ENCODE measurements at regions of chr19 and their contacts with region 1.

Region 1: GRCh38 chr19:3852614-3853254 is 16.1 kb downstream of the ZFR2 start:
- DNase-seq: peak; percentile 79
- ATAC-seq: peak; percentile 85
- H3K4me3 ChIP-seq: no peak overlapping the region
- H3K27ac ChIP-seq: peak overlapping the region; percentile 38; the same call in 1 of the 2 replicates
- H3K4me1 ChIP-seq: peaks cover 21 to 39% of the 10 kb centered on the region in 2 experiments
- H3K27me3 ChIP-seq: no peaks in the 10 kb centered on the region
- CTCF ChIP-seq: peak; percentile 77 to 86 (median 78); a peak in 5 of 6 replicates
- POLR2A ChIP-seq: no peak
- RAD21 ChIP-seq: peak; percentile 97

Region 2: GRCh38 chr19:3665681-3666544 is 186.8 kb before region 1 on chr19:
- CTCF ChIA-PET with region 1: interaction called, 6 read pairs
- POLR2A ChIA-PET with region 1: no interaction called
- RAD21 ChIA-PET with region 1: no interaction called
- intact Hi-C with region 1: loop called (anchors 1 kb)
- DNase-seq: no peak
- ATAC-seq: peak; percentile 90
- H3K4me3 ChIP-seq: no peak overlapping the region
- H3K27ac ChIP-seq: no peak overlapping the region
- H3K4me1 ChIP-seq: peaks cover 0 to 8% of the 10 kb centered on the region in 2 experiments; a peak in 1 of 4 replicates
- H3K27me3 ChIP-seq: no peaks in the 10 kb centered on the region
- CTCF ChIP-seq: peak; percentile 77 to 89 (median 81)
- POLR2A ChIP-seq: no peak
- RAD21 ChIP-seq: peak; percentile 90

Region 3: DNA sequence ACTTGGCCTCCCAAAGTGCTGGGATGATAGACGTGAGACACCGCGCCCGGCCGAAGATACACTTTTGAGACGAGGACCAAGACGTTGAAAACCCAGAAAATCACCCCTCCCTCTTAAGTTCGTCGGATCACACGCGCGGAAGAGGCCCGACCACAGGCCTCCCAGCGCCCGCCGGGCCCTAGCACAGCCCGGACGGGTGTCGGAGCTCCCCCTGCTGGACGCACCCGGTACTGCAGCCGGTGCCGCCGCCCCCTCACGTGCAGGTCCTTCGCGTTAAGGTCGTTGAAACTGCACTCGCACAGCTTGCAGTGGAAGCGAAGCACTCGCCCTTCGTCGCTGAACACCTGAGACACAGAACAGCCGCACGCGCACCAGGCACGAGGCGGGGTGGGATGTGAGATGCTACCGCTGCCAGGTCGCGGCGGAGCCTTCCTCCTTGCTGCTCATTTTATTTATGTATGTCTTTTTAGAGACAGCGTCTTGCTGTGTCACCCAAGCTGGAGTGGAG is 30.8 kb before region 1 on chr19:
- CTCF ChIA-PET with region 1: interaction called, 13 read pairs
- POLR2A ChIA-PET with region 1: no interaction called
- RAD21 ChIA-PET with region 1: no interaction called
- intact Hi-C with region 1: no loop called
- DNase-seq: peak; percentile 40
- ATAC-seq: peak; percentile 94
- H3K4me3 ChIP-seq: no peak overlapping the region
- H3K27ac ChIP-seq: no peak overlapping the region
- H3K4me1 ChIP-seq: peaks cover 0 to 6% of the 10 kb centered on the region in 2 experiments; a peak in 1 of 4 replicates
- H3K27me3 ChIP-seq: no peaks in the 10 kb centered on the region
- CTCF ChIP-seq: peak; percentile 79 to 99 (median 99)
- POLR2A ChIP-seq: no peak
- RAD21 ChIP-seq: peak; percentile 85

Region 4: DNA sequence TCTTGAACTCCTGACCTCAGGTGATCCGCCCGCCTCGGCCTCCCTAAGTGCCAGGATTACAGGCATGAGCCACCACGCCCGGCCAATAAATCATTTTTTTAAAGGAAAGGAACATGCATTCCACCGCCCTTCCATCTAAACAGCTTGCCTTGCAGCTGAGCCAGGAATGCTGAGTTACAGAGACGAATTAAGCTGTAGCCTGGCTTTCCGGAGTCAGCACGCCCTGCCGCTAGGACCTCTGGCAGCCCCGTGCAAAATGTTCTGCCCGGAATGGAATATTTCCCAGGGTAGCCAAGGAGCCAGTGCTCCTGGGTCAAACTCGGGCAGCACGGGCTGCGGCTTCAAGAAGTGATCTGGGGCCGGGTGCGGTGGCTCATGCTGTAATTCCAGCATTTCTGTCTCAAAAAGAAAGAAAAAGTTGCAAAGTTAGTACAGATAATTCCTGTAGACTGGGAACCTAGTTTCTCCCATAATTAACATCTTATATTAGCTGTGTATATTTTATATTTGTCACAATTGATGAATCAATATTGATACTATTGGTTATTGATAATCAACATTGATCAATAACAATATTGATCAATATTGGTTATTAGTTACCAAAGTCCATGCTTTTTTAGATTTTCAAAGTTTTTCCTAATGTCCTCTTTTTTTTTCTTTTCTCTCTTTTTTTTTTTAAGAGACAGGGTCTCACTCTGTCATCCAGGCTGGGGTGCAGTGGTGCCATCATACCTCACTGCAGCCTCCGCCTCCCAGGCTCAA is 47.0 kb after region 1 on chr19:
- CTCF ChIA-PET with region 1: no interaction called
- POLR2A ChIA-PET with region 1: no interaction called
- RAD21 ChIA-PET with region 1: no interaction called
- intact Hi-C with region 1: no loop called
- DNase-seq: no peak
- ATAC-seq: no peak
- H3K4me3 ChIP-seq: no peak overlapping the region
- H3K27ac ChIP-seq: no peak overlapping the region
- H3K4me1 ChIP-seq: no peaks in the 10 kb centered on the region
- H3K27me3 ChIP-seq: no peaks in the 10 kb centered on the region
- CTCF ChIP-seq: no peak
- POLR2A ChIP-seq: no peak
- RAD21 ChIP-seq: no peak

Region 5: DNA sequence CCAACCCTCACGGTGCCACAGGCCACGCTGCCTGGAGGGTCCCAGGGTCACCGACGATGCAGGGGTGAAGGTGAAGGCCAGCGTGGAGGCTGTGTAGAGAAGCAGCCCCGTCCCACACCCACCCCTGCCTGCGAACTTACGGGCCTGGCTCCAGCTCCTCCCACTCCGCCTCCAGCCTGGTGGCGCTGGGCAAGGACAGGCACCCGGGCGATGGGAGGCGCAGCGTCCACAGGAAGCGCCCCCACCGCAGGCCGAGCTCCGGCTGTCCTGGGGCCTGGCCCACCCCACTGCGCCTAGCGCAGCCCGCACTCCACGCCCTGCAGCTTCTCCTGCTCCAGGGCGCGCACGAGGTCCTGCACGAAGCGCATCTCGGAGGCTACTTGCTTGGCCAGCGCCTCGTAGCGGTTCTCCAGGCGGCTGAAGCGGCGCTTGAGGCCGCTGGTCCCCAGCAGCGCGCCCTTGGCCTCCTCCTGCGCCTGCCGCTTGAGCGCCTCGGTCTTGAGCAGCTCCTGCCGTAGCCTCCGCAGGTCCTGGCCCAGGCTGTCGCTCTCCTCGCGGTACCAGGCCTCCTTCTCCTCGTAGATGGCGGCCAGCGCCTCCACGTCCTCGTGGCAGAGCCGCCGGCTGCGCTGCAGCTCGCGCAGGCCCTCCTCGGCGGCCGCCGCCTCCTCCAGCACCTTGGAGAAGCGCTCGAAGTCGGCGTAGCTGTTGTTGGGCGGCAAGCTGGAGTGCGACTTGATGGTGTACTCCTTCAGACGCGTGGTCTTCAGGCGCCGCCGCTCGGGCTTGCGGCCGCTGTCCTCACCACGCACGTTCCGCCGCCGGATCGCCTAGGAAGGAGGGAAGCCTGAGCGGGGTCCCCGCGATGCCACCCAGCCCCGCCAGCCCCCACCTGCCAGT is 106.3 kb after region 1 on chr19:
- CTCF ChIA-PET with region 1: no interaction called
- POLR2A ChIA-PET with region 1: no interaction called
- RAD21 ChIA-PET with region 1: no interaction called
- intact Hi-C with region 1: no loop called
- DNase-seq: no peak
- ATAC-seq: no peak
- H3K4me3 ChIP-seq: no peak overlapping the region
- H3K27ac ChIP-seq: no peak overlapping the region
- H3K4me1 ChIP-seq: peaks cover 0 to 14% of the 10 kb centered on the region in 2 experiments; a peak in 2 of 4 replicates
- H3K27me3 ChIP-seq: no peaks in the 10 kb centered on the region
- CTCF ChIP-seq: no peak
- POLR2A ChIP-seq: no peak
- RAD21 ChIP-seq: no peak

Region 6: DNA sequence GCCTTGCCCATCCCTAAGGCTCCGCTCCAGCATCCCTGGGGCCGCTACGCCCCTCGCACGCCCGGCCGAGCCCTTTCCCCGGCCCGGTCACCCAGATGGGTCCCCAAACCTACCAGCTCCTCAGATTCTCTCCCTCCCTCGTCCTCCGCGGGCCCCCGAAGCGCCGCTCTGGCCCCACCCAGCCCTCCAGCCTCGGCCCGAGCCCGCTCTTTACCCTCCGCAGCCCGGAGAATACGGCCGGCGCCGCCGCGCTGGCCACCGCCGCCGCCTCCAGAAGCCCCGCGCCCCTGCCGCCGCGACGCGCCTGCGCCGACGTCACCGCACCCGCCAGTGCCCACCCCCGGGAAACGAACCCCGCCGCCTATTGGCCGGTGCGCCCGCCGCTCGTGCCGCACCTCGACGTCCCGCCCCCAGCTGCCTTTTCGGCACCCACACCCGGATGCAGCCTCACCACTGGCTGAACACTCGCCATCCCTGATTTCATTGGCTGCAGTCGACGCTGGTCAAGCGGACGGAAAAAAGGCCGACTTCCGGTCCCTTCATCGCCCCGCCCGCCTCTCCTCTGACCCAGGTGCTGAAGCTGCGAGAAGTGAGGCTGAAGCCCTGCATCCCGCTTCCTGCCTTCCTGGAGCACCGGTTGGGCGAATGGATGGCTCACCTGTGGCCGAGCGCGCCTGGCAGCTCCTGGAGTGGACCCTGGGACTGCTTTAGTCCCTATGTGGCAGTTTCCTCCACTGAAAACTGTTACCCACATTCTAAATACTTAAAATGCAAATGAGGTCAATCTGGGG is 118.3 kb after region 1 on chr19 and contains the start of gene DAPK3:
- CTCF ChIA-PET with region 1: interaction called, 9 read pairs
- POLR2A ChIA-PET with region 1: interaction called, 4 read pairs
- RAD21 ChIA-PET with region 1: interaction called in 1 of 2 experiments, 7 read pairs
- intact Hi-C with region 1: loop called (anchors 2 kb)
- DNase-seq: peak; percentile 96
- ATAC-seq: peak; percentile 84
- H3K4me3 ChIP-seq: peak within 1 kb of the TSS; percentile 82 to 96
- H3K27ac ChIP-seq: peak within 1 kb of the TSS; percentile 76
- H3K4me1 ChIP-seq: peaks cover 15 to 30% of the 10 kb centered on the region in 2 experiments
- H3K27me3 ChIP-seq: no peaks in the 10 kb centered on the region
- CTCF ChIP-seq: no peak
- POLR2A ChIP-seq: no peak
- RAD21 ChIP-seq: no peak
- total RNA-seq, gene DAPK3: 54.8 TPM

Region 7: DNA sequence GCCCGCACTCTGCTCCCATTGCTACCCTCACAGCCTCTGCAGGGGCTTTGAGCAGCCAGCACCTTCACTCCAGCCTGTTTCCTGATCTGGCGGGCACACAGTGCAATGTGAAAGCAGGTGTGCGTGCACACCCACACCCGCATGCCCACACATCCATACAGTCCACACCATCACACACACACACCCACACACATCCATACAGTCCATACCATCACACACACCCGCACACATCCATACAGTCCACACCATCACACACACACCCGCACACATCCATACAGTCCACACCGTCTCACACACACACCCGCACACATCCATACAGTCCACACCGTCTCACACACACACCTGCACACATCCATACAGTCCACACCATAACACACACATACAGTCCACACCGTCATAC is 182.8 kb after region 1 on chr19:
- CTCF ChIA-PET with region 1: no interaction called
- POLR2A ChIA-PET with region 1: no interaction called
- RAD21 ChIA-PET with region 1: no interaction called
- intact Hi-C with region 1: no loop called
- DNase-seq: no peak
- ATAC-seq: no peak; the same call in 1 of the 2 replicates
- H3K4me3 ChIP-seq: no peak overlapping the region
- H3K27ac ChIP-seq: no peak overlapping the region
- H3K4me1 ChIP-seq: no peaks in the 10 kb centered on the region
- H3K27me3 ChIP-seq: no peaks in the 10 kb centered on the region
- CTCF ChIP-seq: no peak
- POLR2A ChIP-seq: no peak
- RAD21 ChIP-seq: no peak

Region 8: GRCh38 chr19:4139614-4140236 is 287.0 kb after region 1 on chr19:
- CTCF ChIA-PET with region 1: no interaction called
- POLR2A ChIA-PET with region 1: no interaction called
- RAD21 ChIA-PET with region 1: no interaction called
- intact Hi-C with region 1: loop called (anchors 10 kb)
- DNase-seq: peak; percentile 71
- ATAC-seq: peak; percentile 88
- H3K4me3 ChIP-seq: peak overlapping the region; percentile 32 to 50
- H3K27ac ChIP-seq: peak overlapping the region; percentile 21; the same call in 1 of the 2 replicates
- H3K4me1 ChIP-seq: peaks cover 15 to 40% of the 10 kb centered on the region in 2 experiments
- H3K27me3 ChIP-seq: no peaks in the 10 kb centered on the region
- CTCF ChIP-seq: peak; percentile 76 to 91 (median 91)
- POLR2A ChIP-seq: no peak
- RAD21 ChIP-seq: peak; percentile 69

Region 9: DNA sequence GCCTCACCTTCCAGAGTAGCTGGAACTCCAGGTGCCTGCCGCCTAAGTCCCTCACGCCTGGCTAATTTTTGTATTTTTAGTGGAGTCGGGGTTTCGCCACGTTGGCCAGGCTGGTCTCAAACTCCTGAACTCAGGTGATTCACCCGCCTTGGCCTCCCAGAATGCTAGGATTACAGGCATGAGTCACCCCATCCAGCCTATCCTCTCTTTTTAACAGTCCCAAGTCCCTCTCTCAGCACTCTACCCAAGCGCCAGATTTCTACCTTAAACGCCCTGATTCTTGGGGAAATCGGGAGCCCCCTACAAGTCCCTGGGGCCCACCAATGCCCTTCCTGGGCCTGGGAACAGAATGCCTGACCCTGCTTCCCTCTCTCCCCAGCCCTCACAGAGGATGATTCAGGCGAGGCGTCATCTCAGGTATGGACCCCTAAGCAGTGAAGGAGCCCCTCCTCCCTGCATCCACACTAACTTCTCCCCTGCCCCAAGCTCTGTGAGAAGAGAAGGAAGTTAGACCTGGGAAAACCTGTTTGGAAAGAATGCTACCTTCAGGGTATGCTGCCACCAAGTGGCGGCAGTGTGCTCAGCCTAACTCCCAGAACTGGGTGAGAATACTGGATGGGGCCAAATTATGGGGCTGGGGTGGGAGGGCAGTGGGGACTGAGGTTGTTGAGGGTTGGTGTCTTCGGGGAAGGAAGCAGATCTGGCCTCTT is 355.8 kb after region 1 on chr19:
- CTCF ChIA-PET with region 1: interaction called, 9 read pairs
- POLR2A ChIA-PET with region 1: no interaction called
- RAD21 ChIA-PET with region 1: no interaction called
- intact Hi-C with region 1: loop called (anchors 1 kb)
- DNase-seq: peak; percentile 66
- ATAC-seq: peak; percentile 77
- H3K4me3 ChIP-seq: peak overlapping the region; percentile 40 to 48
- H3K27ac ChIP-seq: peak overlapping the region; percentile 70
- H3K4me1 ChIP-seq: peaks cover 21 to 40% of the 10 kb centered on the region in 2 experiments
- H3K27me3 ChIP-seq: no peaks in the 10 kb centered on the region
- CTCF ChIP-seq: peak; percentile 76 to 78 (median 77)
- POLR2A ChIP-seq: no peak
- RAD21 ChIP-seq: peak; percentile 77

Measured in HCT116 (cell line).